Activated T-helper 1 cell treated with anti-CD3 and anti-CD28 coated beads, Interleukin-12 subunit alpha, Interleukin-12 subunit beta, Interleukin-2, Interleukin-4 antibody, amounts not matched to agents 30 ng/mL and 10 ng/mL and 1 ng/mL, durations not matched to agents 14 hours and 24 hours and 36 hours (primary cell): ENCODE measurements at regions of chr19 and their contacts with region 1.

Region 1: GRCh38 chr19:36132489-36132891 is 7.4 kb upstream of the CAPNS1 start:
- DNase-seq: peak; percentile 17
- H3K4me3 Mint-ChIP-seq: peak overlapping the region; percentile 7
- H3K27ac Mint-ChIP-seq: peak overlapping the region; percentile 78
- H3K4me1 Mint-ChIP-seq: peaks cover 30% of the 10 kb centered on the region
- H3K27me3 Mint-ChIP-seq: peaks cover 1% of the 10 kb centered on the region

Region 2: GRCh38 chr19:34733826-34734600 is 1398.5 kb before region 1 on chr19 and contains the start of gene ZNF181:
- intact Hi-C with region 1: loop called (anchors 10 kb)
- DNase-seq: peak; percentile 72
- H3K4me3 Mint-ChIP-seq: peak within 1 kb of the TSS; percentile 92
- H3K27ac Mint-ChIP-seq: peak within 1 kb of the TSS; percentile 95
- H3K4me1 Mint-ChIP-seq: peaks cover 24% of the 10 kb centered on the region
- H3K27me3 Mint-ChIP-seq: no peaks in the 10 kb centered on the region
- total RNA-seq, gene ZNF181: 3.1 and 4.3 TPM in 2 replicates

Region 3: DNA sequence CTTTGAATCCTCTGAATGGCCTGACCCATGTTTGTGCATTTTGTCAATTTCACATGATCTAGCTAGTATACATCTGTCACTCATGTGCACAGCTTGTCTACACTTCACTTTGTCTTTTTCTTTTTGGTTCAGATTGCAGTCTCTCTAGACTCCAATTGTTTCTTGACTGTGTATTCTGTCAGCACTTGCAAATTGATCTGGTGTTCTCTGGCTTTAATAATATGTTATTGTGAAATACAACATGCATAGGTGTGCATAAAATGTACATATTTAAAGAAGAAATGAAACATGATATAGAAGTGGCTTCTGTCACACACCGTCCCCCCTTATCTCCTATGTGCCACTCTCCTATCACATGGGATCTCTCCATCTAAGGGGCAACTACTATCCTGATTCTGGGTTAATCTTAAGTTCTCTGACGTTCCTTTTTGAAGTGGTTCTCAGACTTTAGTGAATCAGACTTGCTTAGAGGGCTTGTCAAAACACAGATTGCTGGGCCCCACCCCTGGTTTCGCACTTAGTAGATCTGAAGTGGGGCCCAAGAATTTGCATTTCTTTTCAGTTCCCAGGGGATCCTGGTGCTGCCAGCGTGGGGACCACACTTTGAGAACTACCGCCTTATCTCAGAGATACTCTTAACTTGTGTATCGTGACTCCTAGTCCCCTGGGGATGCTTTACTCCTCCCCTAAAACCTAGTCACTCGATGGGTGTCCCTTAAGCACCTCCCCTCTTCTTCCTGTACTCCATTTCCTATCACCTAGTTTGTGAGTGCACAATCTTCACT is 648.0 kb before region 1 on chr19:
- intact Hi-C with region 1: no loop called
- DNase-seq: no peak
- H3K4me3 Mint-ChIP-seq: no peak overlapping the region
- H3K27ac Mint-ChIP-seq: no peak overlapping the region
- H3K4me1 Mint-ChIP-seq: no peaks in the 10 kb centered on the region
- H3K27me3 Mint-ChIP-seq: peaks cover 18% of the 10 kb centered on the region

Region 4: GRCh38 chr19:36093146-36093662 is 39.3 kb before region 1 on chr19:
- intact Hi-C with region 1: loop called (anchors 1 kb)
- DNase-seq: no peak
- H3K4me3 Mint-ChIP-seq: no peak overlapping the region
- H3K27ac Mint-ChIP-seq: peak overlapping the region; percentile 78
- H3K4me1 Mint-ChIP-seq: peaks cover 15% of the 10 kb centered on the region
- H3K27me3 Mint-ChIP-seq: no peaks in the 10 kb centered on the region

Region 5: GRCh38 chr19:36121486-36122124 is 10.9 kb before region 1 on chr19:
- intact Hi-C with region 1: no loop called
- DNase-seq: no peak
- H3K4me3 Mint-ChIP-seq: no peak overlapping the region
- H3K27ac Mint-ChIP-seq: no peak overlapping the region
- H3K4me1 Mint-ChIP-seq: peaks cover 20% of the 10 kb centered on the region
- H3K27me3 Mint-ChIP-seq: no peaks in the 10 kb centered on the region

Region 6: DNA sequence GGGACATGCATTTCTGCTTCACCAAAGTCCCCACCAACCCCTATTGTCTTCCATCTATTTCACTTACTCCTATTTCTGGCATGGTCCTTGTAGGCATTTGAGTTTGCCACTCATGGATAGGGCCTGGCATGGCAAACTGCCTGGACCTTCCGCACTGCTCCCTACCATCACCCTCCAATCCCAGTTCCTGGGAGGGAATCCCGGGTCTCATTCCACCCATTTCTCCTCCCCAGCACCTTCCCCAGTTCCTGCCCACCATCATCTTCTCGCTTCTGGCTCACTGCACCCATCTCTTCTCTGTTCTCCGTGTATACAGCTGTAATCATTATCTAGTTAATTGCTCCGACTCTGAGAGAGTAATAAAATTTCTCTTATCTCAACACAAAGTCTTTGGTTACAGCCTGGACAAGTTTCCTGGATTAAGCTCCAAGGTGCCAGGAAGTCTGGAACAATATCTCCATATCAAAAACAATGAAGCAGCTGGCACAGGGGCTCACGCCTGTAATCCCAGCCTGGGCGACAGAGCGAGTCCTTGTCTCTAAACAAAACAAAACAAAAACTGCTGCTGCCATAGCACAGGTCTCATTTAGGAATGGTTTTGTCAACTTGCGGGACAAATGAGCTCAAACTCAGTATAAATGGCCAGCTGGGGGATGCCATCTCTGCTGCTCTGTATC is 36.7 kb after region 1 on chr19:
- intact Hi-C with region 1: loop called (anchors 1 kb)
- DNase-seq: no peak
- H3K4me3 Mint-ChIP-seq: no peak overlapping the region
- H3K27ac Mint-ChIP-seq: no peak overlapping the region
- H3K4me1 Mint-ChIP-seq: no peaks in the 10 kb centered on the region
- H3K27me3 Mint-ChIP-seq: peaks cover 1% of the 10 kb centered on the region

Region 7: GRCh38 chr19:36665832-36666231 is 533.3 kb after region 1 on chr19:
- intact Hi-C with region 1: loop called (anchors 5 kb)
- DNase-seq: no peak
- H3K4me3 Mint-ChIP-seq: peak overlapping the region; percentile 99
- H3K27ac Mint-ChIP-seq: peak overlapping the region; percentile 26
- H3K4me1 Mint-ChIP-seq: peaks cover 16% of the 10 kb centered on the region
- H3K27me3 Mint-ChIP-seq: no peaks in the 10 kb centered on the region